AG04449 (cell line): ENCODE measurements at regions of chr4 and their contacts with region 1.

Region 1: DNA sequence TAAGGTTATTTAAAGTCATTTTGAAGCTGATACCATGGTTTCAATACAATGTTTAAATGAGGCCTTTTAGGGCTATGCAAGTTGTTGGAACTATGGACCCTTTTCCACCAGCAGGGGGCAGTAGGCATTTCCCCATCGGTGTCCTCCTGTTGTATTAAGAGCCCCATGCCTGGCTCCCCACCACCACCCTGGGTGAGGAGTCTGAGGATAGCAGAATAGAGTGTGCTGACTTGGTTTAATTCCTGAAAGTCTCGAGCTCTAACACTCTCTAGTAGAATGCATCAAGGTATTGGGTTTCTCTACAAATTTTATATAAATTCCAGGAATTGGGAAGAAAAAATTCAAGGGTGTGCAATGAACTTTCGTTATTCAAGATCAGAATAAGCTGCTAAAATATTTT is 234.8 kb upstream of the JADE1 start:
- DNase-seq: peak; percentile 34
- H3K4me3 ChIP-seq: no peak overlapping the region
- CTCF ChIP-seq: peak; percentile 42

Region 2: GRCh38 chr4:128600996-128601871 is 26.5 kb after region 1 on chr4:
- CTCF ChIA-PET with region 1: interaction called, 21 read pairs
- POLR2A ChIA-PET with region 1: no interaction called
- DNase-seq: peak; percentile 82
- H3K4me3 ChIP-seq: no peak overlapping the region
- CTCF ChIP-seq: no peak